Stomach (tissue), 19 donors: ENCODE measurements at regions of chr6 and their contacts with region 1.

Region 1: DNA sequence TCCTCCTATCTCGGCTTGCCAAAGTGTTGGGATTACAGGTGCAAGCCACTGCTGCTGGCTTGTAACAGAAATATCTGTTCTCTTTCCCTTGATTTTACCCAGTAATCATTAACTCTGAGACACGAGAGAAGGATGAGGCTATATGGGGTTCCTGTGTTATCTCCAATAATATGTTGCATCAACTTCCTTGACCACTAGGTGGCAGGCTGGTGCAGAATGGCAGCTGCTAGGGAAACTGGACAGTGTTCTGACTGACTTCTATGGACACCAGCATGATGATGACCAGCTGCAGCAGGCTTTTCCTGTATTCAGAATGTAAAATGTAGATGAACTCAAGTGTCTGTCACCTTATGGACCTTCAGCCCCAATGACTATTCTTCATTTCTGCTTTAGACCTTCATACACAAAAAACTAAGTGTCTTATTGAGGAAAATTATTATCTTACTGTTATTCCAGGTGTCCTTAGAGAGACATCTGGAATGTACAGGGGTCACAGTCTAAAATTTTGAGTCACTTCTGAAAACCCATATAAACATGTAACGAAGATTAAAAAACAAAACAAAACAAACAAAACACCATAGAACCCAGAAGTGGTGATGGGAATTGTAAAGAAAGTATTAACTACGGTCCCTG is 20.4 kb upstream of the CD109 start:
- DNase-seq: peak; percentile 77 to 90
- H3K4me3 ChIP-seq: no peak overlapping the region
- H3K27ac ChIP-seq: no peak overlapping the region
- H3K4me1 ChIP-seq: peaks cover 0 to 4% (median 0%) of the 10 kb centered on the region in 4 donors
- H3K27me3 ChIP-seq: peaks cover 0 to 3% (median 0%) of the 10 kb centered on the region in 3 donors
- CTCF ChIP-seq: peak in 5 of 7 experiments; percentile 46 to 91 (median 76)
- EP300 ChIP-seq: no peak
- POLR2A ChIP-seq: no peak

Region 2: GRCh38 chr6:73732845-73733675 is 57.5 kb after region 1 on chr6:
- intact Hi-C with region 1: loop called (anchors 10 kb)
- DNase-seq: peak; percentile 59 to 86
- H3K4me3 ChIP-seq: no peak overlapping the region
- H3K27ac ChIP-seq: no peak overlapping the region
- H3K4me1 ChIP-seq: no peaks in the 10 kb centered on the region
- H3K27me3 ChIP-seq: no peaks in the 10 kb centered on the region
- CTCF ChIP-seq: peak in 6 of 7 experiments; percentile 17 to 89 (median 80)
- EP300 ChIP-seq: no peak
- POLR2A ChIP-seq: no peak